Activated naive CD4-positive, alpha-beta T cell treated with anti-CD3 and anti-CD28 coated beads for 36 hours (primary cell): ENCODE measurements at regions of chr2 and their contacts with region 1.

Region 1: GRCh38 chr2:173048897-173049661 is 26.6 kb upstream of the MAP3K20 start:
- DNase-seq: peak; percentile 59
- H3K4me3 Mint-ChIP-seq: peak overlapping the region; percentile 2
- H3K27ac Mint-ChIP-seq: no peak overlapping the region
- H3K4me1 Mint-ChIP-seq: peaks cover 13% of the 10 kb centered on the region
- H3K27me3 Mint-ChIP-seq: peaks cover 12% of the 10 kb centered on the region

Region 2: DNA sequence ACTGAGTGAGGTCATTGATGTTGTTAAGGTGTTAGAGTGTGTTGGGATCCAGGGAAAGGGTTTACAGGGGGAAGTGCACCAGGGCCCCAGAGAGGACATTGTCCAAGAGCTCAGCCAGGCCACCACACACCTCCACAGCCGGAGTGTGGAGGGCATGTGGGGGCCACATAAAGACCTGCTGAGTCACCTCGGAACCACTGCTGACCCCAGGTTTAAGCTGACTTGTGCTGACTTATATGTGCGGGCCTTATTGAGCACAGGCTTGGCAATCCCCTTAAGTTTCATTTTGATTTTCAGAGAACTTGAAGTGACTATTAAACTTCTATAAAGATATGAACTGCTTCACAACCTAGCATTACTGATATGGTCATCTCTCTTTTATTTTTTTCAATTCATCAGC is 139.6 kb before region 1 on chr2:
- CTCF ChIA-PET with region 1: no interaction called
- intact Hi-C with region 1: no loop called
- DNase-seq: no peak
- H3K4me3 Mint-ChIP-seq: no peak overlapping the region
- H3K27ac Mint-ChIP-seq: no peak overlapping the region
- H3K4me1 Mint-ChIP-seq: peaks cover 23% of the 10 kb centered on the region
- H3K27me3 Mint-ChIP-seq: no peaks in the 10 kb centered on the region

Region 3: DNA sequence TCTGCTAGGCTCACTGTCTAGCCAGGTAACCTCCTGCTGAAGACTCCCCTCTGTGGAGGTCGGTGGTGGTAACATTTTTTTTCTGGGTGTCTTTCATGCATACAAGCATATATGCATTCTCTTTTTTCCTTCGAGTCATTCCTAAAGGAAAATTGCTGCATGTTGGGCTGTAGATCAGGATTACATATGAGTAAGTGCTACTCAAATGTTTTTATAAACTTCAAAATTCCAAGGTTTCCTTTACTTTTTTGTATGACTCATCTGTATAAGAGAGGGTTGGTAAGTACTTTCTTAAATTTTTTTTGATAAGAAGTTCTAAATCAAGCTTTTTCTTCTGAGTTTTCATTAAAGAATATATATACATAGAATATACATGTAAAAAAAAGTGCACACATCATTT is 101.6 kb before region 1 on chr2:
- CTCF ChIA-PET with region 1: no interaction called
- intact Hi-C with region 1: no loop called
- DNase-seq: no peak
- H3K4me3 Mint-ChIP-seq: no peak overlapping the region
- H3K27ac Mint-ChIP-seq: no peak overlapping the region
- H3K4me1 Mint-ChIP-seq: peaks cover 25% of the 10 kb centered on the region
- H3K27me3 Mint-ChIP-seq: no peaks in the 10 kb centered on the region

Region 4: GRCh38 chr2:172962824-172963223 is 86.3 kb before region 1 on chr2:
- CTCF ChIA-PET with region 1: no interaction called
- intact Hi-C with region 1: loop called (anchors 2 kb)
- DNase-seq: peak; percentile 44
- H3K4me3 Mint-ChIP-seq: no peak overlapping the region
- H3K27ac Mint-ChIP-seq: peak overlapping the region; percentile 66
- H3K4me1 Mint-ChIP-seq: peaks cover 18% of the 10 kb centered on the region
- H3K27me3 Mint-ChIP-seq: no peaks in the 10 kb centered on the region

Region 5: GRCh38 chr2:173075781-173076580 is 26.9 kb after region 1 on chr2 and contains the start of gene MAP3K20:
- CTCF ChIA-PET with region 1: no interaction called
- intact Hi-C with region 1: loop called (anchors 2 kb)
- DNase-seq: peak; percentile 65
- H3K4me3 Mint-ChIP-seq: peak within 1 kb of the TSS; percentile 68
- H3K27ac Mint-ChIP-seq: no peak within 1 kb of the TSS
- H3K4me1 Mint-ChIP-seq: peaks cover 5% of the 10 kb centered on the region
- H3K27me3 Mint-ChIP-seq: peaks cover 41% of the 10 kb centered on the region
- total RNA-seq, gene MAP3K20: 3.0 to 3.7 TPM

Region 6: DNA sequence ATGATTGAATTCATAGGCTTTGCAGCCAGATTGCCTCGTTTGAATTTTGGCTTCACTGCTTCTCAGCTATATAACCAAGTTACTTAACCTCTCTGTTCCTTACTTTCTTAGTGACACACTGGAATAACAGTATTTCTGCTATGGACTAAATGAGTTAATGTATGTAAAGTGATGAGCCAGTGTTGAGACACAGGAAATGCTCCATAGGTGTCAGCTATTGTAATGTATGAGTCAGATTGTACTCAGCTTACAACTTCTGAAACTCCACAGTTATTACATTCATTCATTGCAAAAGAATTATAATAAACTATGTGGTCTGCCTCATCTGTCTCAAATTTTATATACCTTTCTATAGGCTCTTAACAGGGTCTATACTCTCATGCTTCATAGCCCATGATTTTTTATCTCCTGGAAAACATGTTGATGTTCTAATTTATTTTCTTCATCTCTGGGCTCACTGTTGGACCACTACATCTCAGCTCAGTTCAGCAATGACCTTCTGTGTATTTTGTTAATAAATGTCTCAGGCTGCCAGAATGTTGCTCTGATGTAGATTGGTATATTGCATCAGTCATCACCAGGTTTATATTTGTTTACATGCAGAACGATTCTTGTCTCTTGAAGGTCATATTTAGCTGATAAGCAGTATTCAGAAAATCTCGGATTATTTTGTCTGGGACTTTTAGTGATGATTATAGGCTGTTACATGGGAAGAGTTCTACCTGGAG is 102.8 kb after region 1 on chr2:
- CTCF ChIA-PET with region 1: no interaction called
- intact Hi-C with region 1: loop called (anchors 1 kb)
- DNase-seq: no peak
- H3K4me3 Mint-ChIP-seq: no peak overlapping the region
- H3K27ac Mint-ChIP-seq: no peak overlapping the region
- H3K4me1 Mint-ChIP-seq: peaks cover 21% of the 10 kb centered on the region
- H3K27me3 Mint-ChIP-seq: peaks cover 16% of the 10 kb centered on the region

Region 7: GRCh38 chr2:173432049-173432754 is 383.1 kb after region 1 on chr2:
- CTCF ChIA-PET with region 1: no interaction called
- intact Hi-C with region 1: loop called (anchors 10 kb)
- DNase-seq: no peak
- H3K4me3 Mint-ChIP-seq: no peak overlapping the region
- H3K27ac Mint-ChIP-seq: no peak overlapping the region
- H3K4me1 Mint-ChIP-seq: peaks cover 18% of the 10 kb centered on the region
- H3K27me3 Mint-ChIP-seq: peaks cover 21% of the 10 kb centered on the region